AG04449 (cell line): ENCODE measurements at regions of chr14 and their contacts with region 1.

Region 1: DNA sequence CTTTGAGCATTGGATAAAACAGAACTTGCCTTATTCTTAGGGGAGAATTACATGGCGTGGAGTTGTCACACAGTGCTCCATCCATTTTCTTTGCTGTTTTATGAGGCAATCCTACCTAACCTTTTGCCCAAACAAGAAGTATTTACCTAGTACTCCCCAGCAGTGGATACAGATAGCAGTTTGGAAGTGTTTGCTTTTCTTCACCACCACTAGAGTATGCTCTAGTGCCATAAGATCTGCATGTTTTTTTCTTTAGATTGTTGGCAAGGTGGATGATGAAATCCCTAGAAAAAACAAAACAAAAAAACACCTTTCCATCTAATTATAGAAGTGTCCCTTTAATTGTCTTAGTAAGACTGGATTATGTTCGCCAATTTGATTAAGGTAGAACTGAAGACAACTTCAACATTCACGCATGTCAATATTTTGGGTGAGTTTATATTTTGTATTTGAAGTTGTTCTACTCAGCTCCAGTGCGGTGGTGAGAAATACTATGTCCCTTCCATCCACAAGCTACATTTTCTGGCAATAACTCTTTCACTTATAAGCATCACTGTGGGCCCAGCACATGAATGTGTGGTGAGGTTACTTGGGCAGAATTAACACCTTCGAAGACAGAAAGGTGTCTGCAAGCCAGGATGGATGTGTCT is 23.6 kb upstream of the TMEM260 start:
- DNase-seq: no peak
- H3K4me3 ChIP-seq: no peak overlapping the region
- CTCF ChIP-seq: peak; percentile 39

Region 2: GRCh38 chr14:56579345-56580220 is 23.5 kb after region 1 on chr14 and contains the start of gene TMEM260:
- CTCF ChIA-PET with region 1: interaction called, 11 read pairs
- POLR2A ChIA-PET with region 1: no interaction called
- DNase-seq: peak; percentile 36
- H3K4me3 ChIP-seq: peak within 1 kb of the TSS; percentile 93
- CTCF ChIP-seq: peak; percentile 93

Region 3: DNA sequence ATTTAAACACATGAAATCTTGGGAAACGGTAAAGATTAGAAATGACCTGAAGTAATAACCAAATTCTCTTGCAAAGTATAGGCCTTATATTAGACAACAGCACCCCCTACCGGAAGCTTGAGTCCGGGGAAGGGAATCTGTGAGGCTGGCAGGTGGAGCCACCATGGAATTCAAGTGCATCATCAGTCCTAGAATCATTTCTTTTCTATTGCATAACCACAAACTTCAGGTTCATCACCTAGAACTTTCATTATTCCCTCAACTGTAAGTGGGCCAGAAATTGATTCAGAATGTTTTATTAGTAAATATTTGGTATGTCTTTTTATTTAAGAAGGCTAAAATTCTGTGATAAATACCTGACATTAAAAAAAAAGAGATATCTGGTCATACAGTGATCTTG is 761.3 kb after region 1 on chr14:
- CTCF ChIA-PET with region 1: interaction called, 15 read pairs
- POLR2A ChIA-PET with region 1: no interaction called
- DNase-seq: peak; percentile 21
- H3K4me3 ChIP-seq: no peak overlapping the region
- CTCF ChIP-seq: peak; percentile 66